Activated T-helper 2 cell treated with anti-CD3 and anti-CD28 coated beads, Interferon-gamma antibody, Interleukin-2, Interleukin-4, amounts not matched to agents 10 μg/mL and 5 μg/mL and 100 μg/mL, durations not matched to agents 14 hours and 24 hours and 36 hours (primary cell): ENCODE measurements at regions of chr6 and their contacts with region 1.

Region 1: GRCh38 chr6:155314092-155314772 is at the start of gene TFB1M:
- DNase-seq: peak; percentile 99
- H3K4me3 Mint-ChIP-seq: peak within 1 kb of the TSS; percentile 96
- H3K27ac Mint-ChIP-seq: peak within 1 kb of the TSS; percentile 93
- H3K4me1 Mint-ChIP-seq: peaks cover 36% of the 10 kb centered on the region
- H3K27me3 Mint-ChIP-seq: no peaks in the 10 kb centered on the region
- total RNA-seq, gene TFB1M: 32.5 and 39.8 TPM in 2 replicates

Region 2: DNA sequence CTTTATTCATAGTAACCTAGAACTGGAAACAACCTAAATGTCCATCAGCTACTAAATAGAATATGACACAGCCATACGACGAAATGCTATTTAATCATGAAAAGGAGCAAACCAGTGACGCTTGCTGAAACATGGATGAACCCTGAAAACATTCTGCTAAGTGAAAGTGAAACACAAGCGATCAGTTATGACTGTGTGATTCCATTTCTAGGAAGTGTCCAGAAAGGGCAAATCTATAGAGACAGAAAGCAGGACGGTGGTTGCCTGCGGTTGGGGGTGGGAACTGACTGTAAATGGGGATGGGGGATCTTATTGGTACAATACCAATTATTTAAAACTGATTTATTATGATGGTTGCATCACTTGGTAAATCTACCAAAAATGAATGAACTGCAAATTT is 1084.4 kb before region 1 on chr6:
- intact Hi-C with region 1: loop called (anchors 10 kb)
- DNase-seq: peak; percentile 45
- H3K4me3 Mint-ChIP-seq: peak overlapping the region; percentile 51
- H3K27ac Mint-ChIP-seq: peak overlapping the region; percentile 66
- H3K4me1 Mint-ChIP-seq: peaks cover 44% of the 10 kb centered on the region
- H3K27me3 Mint-ChIP-seq: no peaks in the 10 kb centered on the region

Region 3: DNA sequence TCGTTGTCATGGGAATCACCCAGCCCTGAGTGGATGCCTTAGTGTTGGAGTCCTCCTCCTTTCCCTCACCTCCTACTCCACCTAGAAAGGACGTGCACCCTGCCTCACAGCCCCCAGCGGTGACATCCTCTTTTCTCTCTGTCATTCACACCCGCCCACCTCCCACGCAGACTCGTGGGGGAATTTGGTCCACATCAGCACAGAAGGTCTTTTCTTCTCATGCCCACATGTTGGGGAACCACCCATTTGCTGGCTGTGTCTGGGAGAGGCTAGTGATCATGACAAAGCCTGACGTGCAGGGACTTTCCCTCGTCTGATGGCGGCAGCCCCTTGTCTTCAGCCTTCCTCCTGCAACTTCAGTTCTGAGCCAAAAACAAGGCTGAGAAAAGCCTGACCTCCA is 707.8 kb before region 1 on chr6:
- intact Hi-C with region 1: loop called (anchors 10 kb)
- DNase-seq: peak; percentile 26
- H3K4me3 Mint-ChIP-seq: peak overlapping the region; percentile 5
- H3K27ac Mint-ChIP-seq: peak overlapping the region; percentile 71
- H3K4me1 Mint-ChIP-seq: peaks cover 38% of the 10 kb centered on the region
- H3K27me3 Mint-ChIP-seq: peaks cover 10% of the 10 kb centered on the region

Region 4: GRCh38 chr6:154733012-154733625 is 581.1 kb before region 1 on chr6 and contains the start of gene SCAF8:
- intact Hi-C with region 1: loop called (anchors 1 kb)
- DNase-seq: peak; percentile 83
- H3K4me3 Mint-ChIP-seq: peak within 1 kb of the TSS; percentile 91
- H3K27ac Mint-ChIP-seq: peak within 1 kb of the TSS; percentile 98
- H3K4me1 Mint-ChIP-seq: peaks cover 24% of the 10 kb centered on the region
- H3K27me3 Mint-ChIP-seq: no peaks in the 10 kb centered on the region
- total RNA-seq, gene SCAF8: 35.4 and 37.3 TPM in 2 replicates

Region 5: GRCh38 chr6:154995284-154996015 is 318.8 kb before region 1 on chr6 and contains the start of gene TIAM2:
- intact Hi-C with region 1: loop called (anchors 5 kb)
- DNase-seq: peak; percentile 18
- H3K4me3 Mint-ChIP-seq: peak within 1 kb of the TSS; percentile 71
- H3K27ac Mint-ChIP-seq: no peak within 1 kb of the TSS
- H3K4me1 Mint-ChIP-seq: peaks cover 16% of the 10 kb centered on the region
- H3K27me3 Mint-ChIP-seq: peaks cover 2% of the 10 kb centered on the region
- total RNA-seq, gene TIAM2: 41.4 and 46.0 TPM in 2 replicates

Region 6: GRCh38 chr6:155165029-155165710 is 149.1 kb before region 1 on chr6:
- intact Hi-C with region 1: no loop called
- DNase-seq: no peak
- H3K4me3 Mint-ChIP-seq: no peak overlapping the region
- H3K27ac Mint-ChIP-seq: peak overlapping the region; percentile 5
- H3K4me1 Mint-ChIP-seq: peaks cover 40% of the 10 kb centered on the region
- H3K27me3 Mint-ChIP-seq: no peaks in the 10 kb centered on the region

Region 7: GRCh38 chr6:155188707-155189496 is 125.3 kb before region 1 on chr6:
- intact Hi-C with region 1: loop called (anchors 1 kb)
- DNase-seq: no peak
- H3K4me3 Mint-ChIP-seq: peak overlapping the region; percentile 26
- H3K27ac Mint-ChIP-seq: peak overlapping the region; percentile 89
- H3K4me1 Mint-ChIP-seq: peaks cover 46% of the 10 kb centered on the region
- H3K27me3 Mint-ChIP-seq: no peaks in the 10 kb centered on the region

Region 8: DNA sequence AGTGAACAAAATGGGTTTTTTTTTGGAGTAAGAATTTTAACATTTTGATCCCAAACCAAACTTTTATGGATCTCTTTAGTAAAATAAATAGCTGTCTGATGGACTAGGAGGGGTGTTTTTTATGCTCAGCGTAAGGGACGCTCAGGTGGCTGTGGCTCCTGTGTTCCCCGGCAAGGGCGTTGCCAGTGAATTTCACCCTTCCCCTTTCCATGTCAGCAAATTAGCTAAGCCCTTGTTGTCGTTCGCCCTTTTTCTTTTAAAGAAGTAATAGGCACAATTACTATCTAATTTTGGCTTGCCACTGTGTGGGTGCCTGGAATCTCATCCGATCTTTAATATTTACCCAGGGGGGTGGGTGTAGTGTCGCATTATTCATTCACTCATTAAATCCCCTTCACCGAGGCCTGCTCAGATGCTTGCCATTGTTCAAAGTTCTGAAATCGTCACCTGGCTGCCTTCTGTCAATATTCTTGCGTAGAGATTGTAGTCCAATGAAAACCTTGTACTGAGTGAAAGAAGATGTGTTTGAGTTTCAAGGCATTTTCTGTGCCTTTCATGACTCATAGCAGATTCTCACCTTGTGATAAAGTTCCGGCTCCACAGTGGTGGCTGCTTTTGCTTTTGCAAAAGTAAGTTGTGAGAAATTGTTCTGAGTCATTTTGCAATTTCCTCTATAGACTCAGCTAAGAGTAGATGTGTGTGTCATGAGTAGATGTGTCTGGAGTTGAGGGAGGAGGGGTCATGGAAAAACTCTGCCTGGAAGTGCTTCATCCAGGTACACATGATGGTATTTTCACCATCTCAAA is 90.4 kb before region 1 on chr6:
- intact Hi-C with region 1: loop called (anchors 1 kb)
- DNase-seq: peak; percentile 56
- H3K4me3 Mint-ChIP-seq: peak overlapping the region; percentile 19
- H3K27ac Mint-ChIP-seq: peak overlapping the region; percentile 77
- H3K4me1 Mint-ChIP-seq: peaks cover 27% of the 10 kb centered on the region
- H3K27me3 Mint-ChIP-seq: no peaks in the 10 kb centered on the region